Posterior vena cava (tissue), 2 donors: ENCODE measurements at regions of chr12 and their contacts with region 1.

Region 1: DNA sequence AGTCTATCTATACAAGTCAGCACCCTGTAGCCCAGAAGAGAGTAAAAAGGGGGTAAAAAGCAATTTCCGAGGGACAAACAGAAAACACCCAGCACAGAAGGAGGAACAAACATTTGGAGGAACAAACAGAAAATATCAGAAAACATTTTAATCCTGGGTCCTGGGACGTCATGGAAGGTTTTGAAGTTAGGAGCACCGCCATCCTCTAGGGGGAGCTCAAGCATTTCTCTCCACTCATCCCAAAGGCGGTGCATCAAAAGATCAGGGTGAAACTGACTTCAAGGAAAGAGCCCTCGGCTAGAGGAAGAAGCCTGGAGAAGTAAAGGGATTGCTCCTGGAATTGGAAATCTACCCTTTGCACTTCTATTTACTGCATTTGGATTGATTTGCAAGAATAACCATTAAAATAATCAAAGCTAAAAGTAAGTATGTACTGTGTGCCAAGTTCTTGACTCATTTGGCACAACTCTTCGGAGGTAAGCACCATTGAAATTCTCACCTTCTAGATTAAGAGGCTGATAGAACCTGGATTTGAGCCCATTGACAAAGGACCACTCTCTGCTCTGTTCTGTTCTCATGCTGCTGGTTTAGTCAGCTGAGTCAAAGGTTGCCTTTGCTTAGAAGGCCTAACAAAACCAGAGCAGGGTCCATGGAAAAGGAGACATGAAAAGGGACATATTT is 17.2 kb upstream of the POC1B start:
- DNase-seq: no peak

Region 2: DNA sequence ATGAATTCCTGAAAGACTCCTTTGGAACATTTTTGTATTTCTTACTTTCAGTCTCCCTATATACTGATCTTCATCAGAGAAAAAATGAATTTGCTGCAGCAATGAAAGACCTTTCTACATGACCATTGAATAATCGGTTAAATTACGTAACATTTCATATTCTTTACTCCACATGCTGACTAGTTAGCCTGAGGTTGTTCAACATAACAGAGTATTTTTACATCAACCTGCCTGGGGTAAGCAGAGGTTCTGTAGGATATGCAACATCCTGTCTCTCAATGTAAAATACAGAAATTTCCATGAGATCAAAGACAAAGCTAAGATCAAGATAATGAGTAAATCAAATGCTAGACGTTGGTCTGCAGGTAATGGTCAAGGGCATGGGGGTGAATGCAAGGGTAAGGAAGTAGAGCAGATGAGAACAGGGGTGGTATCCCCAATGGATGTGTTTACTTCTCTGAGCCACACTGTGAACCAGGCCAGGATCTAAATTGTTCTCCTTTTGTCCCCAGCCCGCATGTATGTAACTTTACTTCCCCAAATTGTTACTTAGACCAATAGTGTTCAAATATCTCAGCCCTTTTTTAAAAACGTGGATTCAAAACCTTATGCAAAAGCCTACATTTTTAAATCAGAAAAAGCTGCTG is 236.1 kb before region 1 on chr12:
- intact Hi-C with region 1: no loop called
- DNase-seq: no peak

Region 3: GRCh38 chr12:90102957-90103652 is 560.1 kb after region 1 on chr12:
- intact Hi-C with region 1: loop called in 1 of 2 experiments (anchors 10 kb)
- DNase-seq: no peak

Region 4: GRCh38 chr12:90938451-90938850 is 1395.4 kb after region 1 on chr12:
- intact Hi-C with region 1: loop called in 1 of 2 experiments (anchors 10 kb)
- DNase-seq: no peak